ENCODE measurements at regions of chr3 and their contacts with region 1.

Region 1: GRCh38 chr3:187519428-187519890 is 150.7 kb downstream of the SST start:
- DNase-seq: no peak
- ATAC-seq: no peak
- H3K4me3 ChIP-seq: no peak overlapping the region
- H3K27ac ChIP-seq: no peak overlapping the region
- H3K4me1 ChIP-seq: no peaks in the 10 kb centered on the region
- H3K27me3 ChIP-seq: no peaks in the 10 kb centered on the region

Region 2: GRCh38 chr3:187507905-187508304 is 11.6 kb before region 1 on chr3:
- intact Hi-C with region 1: loop called in 1 of 4 experiments (anchors 2 kb)
- DNase-seq: no peak
- ATAC-seq: no peak
- H3K4me3 ChIP-seq: no peak overlapping the region
- H3K27ac ChIP-seq: no peak overlapping the region
- H3K4me1 ChIP-seq: no peaks in the 10 kb centered on the region
- H3K27me3 ChIP-seq: no peaks in the 10 kb centered on the region

Measured in right cardiac atrium (tissue), 5 donors.